Activated CD4-positive, alpha-beta T cell treated with anti-CD3 and anti-CD28 coated beads for 36 hours (primary cell): ENCODE measurements at regions of chr4 and their contacts with region 1.

Region 1: GRCh38 chr4:80184053-80184790 is 13.1 kb upstream of the PRDM8 start:
- DNase-seq: peak; percentile 96
- ATAC-seq: peak; percentile 82
- H3K4me3 Mint-ChIP-seq: peak overlapping the region; percentile 82
- H3K27ac Mint-ChIP-seq: peak overlapping the region; percentile 90
- H3K4me1 Mint-ChIP-seq: peaks cover 45% of the 10 kb centered on the region
- H3K27me3 Mint-ChIP-seq: peaks cover 19% of the 10 kb centered on the region

Region 2: DNA sequence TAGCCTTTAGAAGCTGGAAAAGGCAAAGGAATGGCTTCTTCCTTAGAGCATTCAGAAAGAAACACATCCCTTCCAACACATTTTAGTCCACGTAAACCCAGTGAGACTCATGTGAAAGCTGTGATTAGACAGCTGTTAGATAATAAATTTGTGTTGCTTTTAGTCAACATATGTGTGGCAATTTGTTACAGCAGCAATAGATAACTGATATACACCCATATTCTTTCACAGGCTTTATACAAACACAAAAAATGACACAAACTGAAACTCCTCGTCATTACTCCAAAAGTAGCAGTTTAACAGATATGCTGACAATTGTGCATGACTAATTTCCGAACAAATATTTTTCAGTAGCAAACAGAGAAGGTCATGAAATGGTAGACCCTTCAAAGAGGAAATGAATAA is 176.5 kb before region 1 on chr4:
- CTCF ChIA-PET with region 1: no interaction called
- POLR2A ChIA-PET with region 1: no interaction called
- intact Hi-C with region 1: loop called (anchors 1 to 5 kb)
- DNase-seq: no peak
- ATAC-seq: peak; percentile 68
- H3K4me3 Mint-ChIP-seq: no peak overlapping the region
- H3K27ac Mint-ChIP-seq: peak overlapping the region; percentile 67
- H3K4me1 Mint-ChIP-seq: peaks cover 43% of the 10 kb centered on the region
- H3K27me3 Mint-ChIP-seq: no peaks in the 10 kb centered on the region

Region 3: DNA sequence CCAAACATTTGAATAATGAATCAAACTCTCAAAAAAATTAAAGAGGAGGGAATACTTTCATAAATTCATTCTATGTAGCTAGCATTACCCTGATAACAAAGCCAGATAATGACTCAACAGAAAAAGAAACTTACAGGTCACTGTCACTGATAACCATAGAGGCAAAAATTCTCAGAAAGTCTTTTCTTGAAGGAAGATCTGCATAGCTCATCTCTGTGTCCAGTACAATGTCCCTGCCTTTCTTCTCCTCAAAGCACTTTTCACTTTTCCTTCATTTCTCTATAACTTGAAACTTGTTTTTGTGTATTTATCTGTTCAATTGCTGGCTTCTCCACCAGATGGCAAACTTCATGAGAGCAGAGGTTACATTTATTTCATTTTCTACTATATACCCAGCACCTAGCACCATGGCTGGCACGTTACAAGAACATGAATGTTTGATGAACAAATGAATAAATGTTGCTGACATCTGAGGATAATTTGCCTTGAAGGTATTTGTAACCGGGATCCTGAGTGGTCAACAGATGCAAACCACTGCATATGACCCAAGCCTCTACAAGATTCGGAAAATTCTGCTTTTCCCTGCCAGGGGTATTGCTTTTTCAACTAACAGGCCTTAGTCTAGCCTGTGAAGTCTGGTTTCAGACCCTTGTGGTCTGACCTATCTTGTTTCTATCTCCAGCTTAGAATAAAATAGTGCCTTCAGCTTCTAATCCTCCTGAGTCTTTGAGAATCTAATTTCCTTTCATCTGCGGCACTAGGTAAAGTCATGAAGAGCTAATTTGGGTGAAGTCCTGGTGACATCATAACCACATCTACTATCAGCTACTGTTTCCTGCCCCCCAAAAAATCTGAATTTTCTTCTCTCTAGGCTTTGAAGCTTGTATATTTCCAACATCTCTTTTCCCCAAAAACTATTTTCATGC is 58.7 kb before region 1 on chr4:
- CTCF ChIA-PET with region 1: interaction called, 29 read pairs
- POLR2A ChIA-PET with region 1: no interaction called
- intact Hi-C with region 1: loop called (anchors 1 kb)
- DNase-seq: peak; percentile 42
- ATAC-seq: peak; percentile 79
- H3K4me3 Mint-ChIP-seq: peak overlapping the region; percentile 9
- H3K27ac Mint-ChIP-seq: peak overlapping the region; percentile 39
- H3K4me1 Mint-ChIP-seq: peaks cover 49% of the 10 kb centered on the region
- H3K27me3 Mint-ChIP-seq: no peaks in the 10 kb centered on the region

Region 4: DNA sequence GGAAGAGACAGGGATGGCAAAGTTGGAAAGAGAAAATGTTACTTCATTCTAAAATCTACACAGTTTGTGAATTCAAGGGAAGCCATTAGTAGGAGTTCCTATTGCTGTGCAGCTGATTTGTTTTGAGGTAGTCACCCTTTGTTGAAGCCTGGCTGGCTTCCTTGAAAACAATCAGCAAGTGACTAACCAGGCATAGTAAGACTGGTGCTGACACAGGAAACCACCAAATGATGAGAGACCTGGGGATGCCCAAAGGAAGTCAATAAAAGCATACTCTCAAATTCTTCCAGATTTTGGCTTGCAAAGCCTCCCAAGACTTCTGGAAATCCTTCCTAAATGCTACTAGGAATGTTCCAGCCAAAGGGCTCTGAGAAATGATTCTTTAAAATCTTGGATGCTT is 10.8 kb before region 1 on chr4:
- CTCF ChIA-PET with region 1: interaction called, 66 read pairs
- POLR2A ChIA-PET with region 1: interaction called, 6 read pairs
- intact Hi-C with region 1: loop called (anchors 1 kb)
- DNase-seq: peak; percentile 72
- ATAC-seq: peak; percentile 91
- H3K4me3 Mint-ChIP-seq: peak overlapping the region; percentile 43
- H3K27ac Mint-ChIP-seq: peak overlapping the region; percentile 79
- H3K4me1 Mint-ChIP-seq: peaks cover 51% of the 10 kb centered on the region
- H3K27me3 Mint-ChIP-seq: no peaks in the 10 kb centered on the region

Region 5: GRCh38 chr4:80215449-80216052 is 31.3 kb after region 1 on chr4:
- CTCF ChIA-PET with region 1: interaction called, 4 read pairs
- POLR2A ChIA-PET with region 1: no interaction called
- intact Hi-C with region 1: loop called in 1 of 2 experiments (anchors 1 kb)
- DNase-seq: no peak
- ATAC-seq: no peak
- H3K4me3 Mint-ChIP-seq: no peak overlapping the region
- H3K27ac Mint-ChIP-seq: no peak overlapping the region
- H3K4me1 Mint-ChIP-seq: peaks cover 2% of the 10 kb centered on the region
- H3K27me3 Mint-ChIP-seq: peaks cover 17% of the 10 kb centered on the region

Region 6: GRCh38 chr4:80237992-80238391 is 53.8 kb after region 1 on chr4:
- CTCF ChIA-PET with region 1: no interaction called
- POLR2A ChIA-PET with region 1: no interaction called
- intact Hi-C with region 1: no loop called
- DNase-seq: no peak
- ATAC-seq: no peak
- H3K4me3 Mint-ChIP-seq: no peak overlapping the region
- H3K27ac Mint-ChIP-seq: no peak overlapping the region
- H3K4me1 Mint-ChIP-seq: no peaks in the 10 kb centered on the region
- H3K27me3 Mint-ChIP-seq: peaks cover 4% of the 10 kb centered on the region